CD4-positive, alpha-beta memory T cell (primary cell): ENCODE measurements at regions of chr18 and their contacts with region 1.

Region 1: GRCh38 chr18:13800505-13801259 is 23.3 kb upstream of the MC5R start:
- DNase-seq: peak in 3 of 5 donors; percentile 23 to 25 (median 24)
- H3K4me3 ChIP-seq: no peak overlapping the region
- H3K4me3 Mint-ChIP-seq: peak overlapping the region in 7 of 8 donors; percentile 41 to 84 (median 50)
- H3K27ac ChIP-seq: no peak overlapping the region
- H3K27ac Mint-ChIP-seq: no peak overlapping the region
- H3K4me1 ChIP-seq: peaks cover 7% of the 10 kb centered on the region
- H3K4me1 Mint-ChIP-seq: peaks cover 3 to 6% (median 5%) of the 10 kb centered on the region in 4 donors
- H3K27me3 ChIP-seq: peaks cover 13% of the 10 kb centered on the region
- H3K27me3 Mint-ChIP-seq: peaks cover 45 to 48% of the 10 kb centered on the region in 2 donors

Region 2: DNA sequence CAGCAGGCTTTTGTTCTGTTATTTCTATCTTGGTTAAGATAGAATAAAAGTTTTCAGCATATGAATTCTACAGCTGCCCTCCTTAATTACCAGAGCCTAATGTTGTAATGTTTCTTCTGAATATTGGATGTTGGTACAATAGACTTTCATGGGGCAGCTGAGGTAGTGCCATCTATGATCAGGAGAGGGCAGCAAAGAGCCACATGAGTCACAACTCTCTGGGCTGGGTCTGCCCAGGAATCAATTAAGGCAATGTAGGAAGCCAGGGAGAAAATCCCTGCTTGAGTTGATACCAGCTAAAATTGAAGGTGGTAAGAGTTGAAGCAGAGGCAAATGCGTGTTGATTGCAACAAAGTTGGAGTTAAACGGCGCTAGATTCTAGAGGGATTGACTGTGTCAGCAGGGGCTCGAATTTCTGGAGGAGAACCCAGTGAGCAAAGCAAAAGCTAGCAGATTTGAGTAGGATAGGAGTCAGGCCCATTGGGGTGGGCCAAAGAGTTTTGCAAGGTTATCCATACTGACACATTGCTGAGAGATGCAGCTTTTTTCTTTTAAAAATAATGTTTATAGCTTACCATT is 12.7 kb after region 1 on chr18:
- CTCF ChIA-PET with region 1: interaction called, 27 read pairs
- POLR2A ChIA-PET with region 1: no interaction called
- intact Hi-C with region 1: no loop called
- DNase-seq: peak in 4 of 5 donors; percentile 30 to 45 (median 32)
- H3K4me3 ChIP-seq: no peak overlapping the region
- H3K4me3 Mint-ChIP-seq: no peak overlapping the region
- H3K27ac ChIP-seq: no peak overlapping the region
- H3K27ac Mint-ChIP-seq: no peak overlapping the region
- H3K4me1 ChIP-seq: no peaks in the 10 kb centered on the region
- H3K4me1 Mint-ChIP-seq: peaks cover 0 to 2% (median under 1%) of the 10 kb centered on the region in 4 donors
- H3K27me3 ChIP-seq: no peaks in the 10 kb centered on the region
- H3K27me3 Mint-ChIP-seq: peaks cover 5 to 8% of the 10 kb centered on the region in 2 donors

Region 3: DNA sequence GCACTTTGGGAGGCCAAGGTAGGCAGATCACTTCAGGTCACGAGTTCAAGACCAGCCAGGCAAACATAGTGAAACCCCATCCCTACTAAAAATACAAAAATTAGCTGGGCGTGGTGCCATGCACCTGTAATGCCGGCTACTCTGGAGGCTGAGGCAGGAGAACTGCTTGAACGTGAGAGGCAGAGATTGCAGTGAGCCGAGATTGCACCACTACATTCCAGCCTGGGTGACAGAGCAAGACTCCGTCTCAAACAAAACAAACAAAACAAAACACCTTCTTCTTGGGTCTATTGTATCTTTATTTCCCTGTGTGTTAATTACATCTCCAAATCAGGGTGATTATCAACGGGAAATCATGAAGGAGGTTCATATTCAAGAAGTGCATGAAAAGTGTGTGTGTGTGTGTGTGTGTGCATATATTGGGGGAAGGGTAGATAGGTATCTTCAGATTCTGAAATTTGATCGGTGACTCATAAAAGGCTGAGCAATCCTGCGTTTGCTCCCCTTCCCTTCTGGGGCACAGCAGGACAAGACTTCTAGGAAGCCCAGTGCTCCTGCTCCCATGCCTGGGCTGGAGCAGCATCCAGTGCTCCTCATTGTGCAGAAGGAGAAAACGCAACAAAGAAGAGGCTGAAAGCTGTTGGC is 49.0 kb after region 1 on chr18:
- CTCF ChIA-PET with region 1: no interaction called
- POLR2A ChIA-PET with region 1: no interaction called
- intact Hi-C with region 1: loop called (anchors 10 kb)
- DNase-seq: no peak
- H3K4me3 ChIP-seq: no peak overlapping the region
- H3K4me3 Mint-ChIP-seq: no peak overlapping the region
- H3K27ac ChIP-seq: no peak overlapping the region
- H3K27ac Mint-ChIP-seq: no peak overlapping the region
- H3K4me1 ChIP-seq: no peaks in the 10 kb centered on the region
- H3K4me1 Mint-ChIP-seq: no peaks in the 10 kb centered on the region
- H3K27me3 ChIP-seq: no peaks in the 10 kb centered on the region
- H3K27me3 Mint-ChIP-seq: peaks cover 4 to 5% of the 10 kb centered on the region in 2 donors